Prostate gland (tissue), 2 donors: ENCODE measurements at regions of chr12 and their contacts with region 1.

Region 1: GRCh38 chr12:121499929-121500793 is 80.7 kb downstream of the KDM2B start:
- DNase-seq: peak; percentile 54
- H3K4me3 ChIP-seq: no peak overlapping the region
- H3K27ac ChIP-seq: peak overlapping the region in 1 of 2 donors; percentile 22
- H3K4me1 ChIP-seq: no peaks in the 10 kb centered on the region
- H3K27me3 ChIP-seq: no peaks in the 10 kb centered on the region
- CTCF ChIP-seq: peak; percentile 70 to 94 (median 84)
- POLR2A ChIP-seq: no peak

Region 2: GRCh38 chr12:121536899-121537813 is 37.0 kb after region 1 on chr12:
- intact Hi-C with region 1: loop called (anchors 2 kb)
- DNase-seq: peak; percentile 67
- H3K4me3 ChIP-seq: peak overlapping the region; percentile 50 to 51
- H3K27ac ChIP-seq: peak overlapping the region; percentile 76 to 82
- H3K4me1 ChIP-seq: peaks cover 4% of the 10 kb centered on the region
- H3K27me3 ChIP-seq: no peaks in the 10 kb centered on the region
- CTCF ChIP-seq: no peak
- POLR2A ChIP-seq: peak; percentile 39

Region 3: DNA sequence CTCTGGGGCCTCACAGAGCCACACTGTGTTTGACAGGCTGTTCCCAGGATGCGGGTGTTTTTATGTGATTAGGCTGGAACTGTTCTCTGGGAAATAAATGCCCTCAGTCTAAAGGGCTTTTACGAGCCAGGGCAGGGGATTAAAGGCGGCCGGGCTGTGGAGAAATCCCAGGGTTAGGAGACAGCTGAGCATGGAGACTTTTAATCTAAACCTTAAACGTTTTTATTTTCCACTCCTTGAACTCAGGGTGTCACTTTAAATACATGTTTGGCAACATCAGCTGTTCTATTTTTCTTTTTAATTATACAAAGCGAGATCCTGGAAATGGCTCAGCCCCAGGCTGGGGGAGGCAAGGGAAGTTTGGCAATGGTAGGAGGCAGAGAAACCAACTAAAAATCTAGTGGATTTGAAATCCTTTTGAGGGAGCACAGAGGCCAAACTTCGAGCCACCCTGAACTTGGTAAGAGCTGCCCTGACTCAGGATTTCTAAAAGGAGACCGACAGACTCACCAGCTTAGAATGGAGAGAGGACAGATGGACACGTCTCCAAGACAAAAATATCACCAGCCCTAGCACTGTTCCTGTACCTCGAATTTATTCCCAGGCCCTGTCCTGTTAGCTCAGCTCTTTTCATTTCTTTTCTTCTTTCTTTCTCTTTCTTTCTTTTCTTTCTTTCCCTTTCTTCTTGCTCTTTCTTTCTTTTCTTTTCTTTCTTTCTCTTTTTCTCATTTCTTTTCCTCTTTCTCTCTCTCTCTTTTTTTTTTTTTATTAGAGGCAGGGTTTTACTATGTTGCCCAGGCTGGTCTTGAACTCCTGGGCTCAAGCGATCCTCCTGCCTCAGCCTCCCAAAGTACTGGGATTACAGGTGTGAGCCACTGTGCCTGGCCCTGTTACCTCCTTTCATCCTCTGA is 110.3 kb after region 1 on chr12:
- intact Hi-C with region 1: no loop called
- DNase-seq: no peak
- H3K4me3 ChIP-seq: no peak overlapping the region
- H3K27ac ChIP-seq: peak overlapping the region; percentile 1 to 33
- H3K4me1 ChIP-seq: no peaks in the 10 kb centered on the region
- H3K27me3 ChIP-seq: no peaks in the 10 kb centered on the region
- CTCF ChIP-seq: no peak
- POLR2A ChIP-seq: no peak

Region 4: DNA sequence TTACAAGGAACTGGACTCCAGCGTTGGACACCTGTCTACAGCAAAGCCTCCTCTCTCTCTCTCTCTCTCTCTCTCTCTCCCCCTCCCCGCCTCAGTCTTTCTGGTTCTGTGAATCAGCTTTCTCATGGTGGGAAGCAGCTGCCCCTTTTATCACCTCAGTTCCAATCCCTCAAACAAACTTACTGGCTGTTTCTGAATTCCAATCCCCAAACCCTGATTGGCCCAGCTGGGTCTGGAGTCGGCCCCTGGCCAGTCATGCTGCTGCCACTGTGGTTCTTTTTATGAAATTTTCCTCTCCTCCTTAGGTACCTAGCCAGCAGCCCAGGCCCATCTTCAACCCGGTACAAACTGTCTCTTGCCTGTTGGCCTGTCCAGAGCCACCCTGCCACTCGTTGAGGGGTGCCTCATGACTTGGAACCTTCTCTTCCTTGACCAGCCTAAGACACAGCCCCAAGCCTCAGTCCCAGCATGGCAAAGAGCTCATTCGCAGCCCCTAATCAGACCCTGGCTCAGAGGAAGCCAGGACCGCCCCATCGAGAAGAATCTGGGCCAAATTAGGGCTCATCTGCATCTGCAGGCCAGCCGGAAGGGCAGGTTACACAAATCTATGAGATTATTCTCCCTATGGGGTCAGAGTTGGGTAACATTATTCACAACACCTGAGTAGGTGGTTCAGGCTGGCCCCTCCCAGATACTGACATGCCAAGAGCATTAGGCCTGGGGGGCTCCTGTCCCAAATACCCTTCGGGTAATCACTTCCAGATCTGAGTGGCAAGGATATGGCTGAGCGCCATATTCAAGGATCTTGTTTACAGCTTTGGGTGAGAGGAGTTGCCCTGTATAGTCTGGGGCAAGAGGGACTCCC is 178.8 kb after region 1 on chr12:
- intact Hi-C with region 1: loop called (anchors 5 kb)
- DNase-seq: no peak
- H3K4me3 ChIP-seq: no peak overlapping the region
- H3K27ac ChIP-seq: no peak overlapping the region
- H3K4me1 ChIP-seq: no peaks in the 10 kb centered on the region
- H3K27me3 ChIP-seq: no peaks in the 10 kb centered on the region
- CTCF ChIP-seq: no peak
- POLR2A ChIP-seq: no peak

Region 5: DNA sequence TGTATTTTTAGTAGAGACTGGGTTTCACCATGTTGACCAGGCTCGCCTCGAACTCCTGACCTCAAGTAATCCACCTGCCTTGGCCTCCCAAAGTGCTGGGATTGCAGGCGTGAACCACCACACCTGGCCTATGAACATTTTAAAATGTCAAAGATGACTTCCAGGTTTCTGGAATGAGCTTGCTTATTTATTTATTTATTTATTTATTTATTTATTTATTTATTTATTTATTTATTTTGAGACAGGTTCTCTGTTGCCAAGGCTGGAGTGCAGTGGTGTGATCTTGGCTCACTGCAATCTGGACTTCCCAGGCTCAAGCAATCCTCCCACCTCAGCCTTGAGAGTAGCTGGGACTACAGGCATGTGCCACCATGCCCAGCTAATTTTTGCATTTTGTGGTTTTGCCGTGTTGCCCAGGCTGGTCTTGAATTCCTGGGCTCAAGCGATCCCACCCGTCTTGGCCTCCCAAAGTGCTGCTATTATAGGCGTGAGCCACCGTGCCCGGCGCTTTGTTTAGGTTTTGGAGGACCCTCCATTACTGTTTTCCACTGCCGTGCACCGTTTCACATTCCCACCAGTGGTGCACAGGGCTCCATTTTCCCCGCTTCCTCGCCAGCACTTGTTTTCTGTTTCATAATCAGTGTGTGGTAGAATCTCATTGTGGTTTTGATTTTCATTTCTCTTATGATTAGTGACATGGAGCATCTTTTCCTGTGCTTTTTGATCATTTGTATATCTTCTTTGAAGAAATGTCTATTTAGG is 411.8 kb after region 1 on chr12:
- intact Hi-C with region 1: no loop called
- DNase-seq: no peak
- H3K4me3 ChIP-seq: no peak overlapping the region
- H3K27ac ChIP-seq: no peak overlapping the region
- H3K4me1 ChIP-seq: no peaks in the 10 kb centered on the region
- H3K27me3 ChIP-seq: no peaks in the 10 kb centered on the region
- CTCF ChIP-seq: no peak
- POLR2A ChIP-seq: no peak